GM12878 (cell line): ENCODE measurements at regions of chr9 and their contacts with region 1.

Region 1: GRCh38 chr9:83544002-83544698 is 5.9 kb upstream of the FRMD3 start:
- DNase-seq: peak; percentile 8
- ATAC-seq: peak; percentile 99
- H3K4me3 ChIP-seq: no peak overlapping the region
- H3K27ac ChIP-seq: no peak overlapping the region
- H3K4me1 ChIP-seq: no peaks in the 10 kb centered on the region
- H3K27me3 ChIP-seq: no peaks in the 10 kb centered on the region
- CTCF ChIP-seq: peak; percentile 72 to 87 (median 82)
- EP300 ChIP-seq: no peak
- POLR2A ChIP-seq: no peak
- RAD21 ChIP-seq: peak; percentile 85

Region 2: DNA sequence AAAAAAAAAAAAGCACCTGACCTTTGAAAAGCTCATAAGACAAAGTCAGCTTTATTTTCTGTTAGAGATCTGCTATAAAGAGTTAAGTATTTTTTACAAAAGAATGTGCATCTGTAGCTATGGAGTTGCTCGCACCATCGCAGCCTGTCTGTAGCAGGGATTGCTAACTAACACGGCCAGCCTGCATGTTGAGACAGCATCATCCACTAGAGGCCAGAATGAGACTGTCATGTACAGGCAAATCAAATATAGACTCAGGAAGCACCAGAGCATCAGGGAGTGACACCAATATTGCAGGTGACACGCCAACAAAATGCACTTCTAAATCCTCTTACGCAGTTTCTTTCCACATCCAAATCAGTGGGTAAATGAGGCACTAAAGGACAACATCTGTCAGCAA is 344.9 kb before region 1 on chr9:
- CTCF ChIA-PET with region 1: interaction called, 3 read pairs
- POLR2A ChIA-PET with region 1: no interaction called
- RAD21 ChIA-PET with region 1: no interaction called
- SMC1A ChIA-PET with region 1: no interaction called
- in situ Hi-C with region 1: no loop called
- intact Hi-C with region 1: loop called (anchors 1 kb)
- DNase-seq: no peak
- ATAC-seq: peak; percentile 74
- H3K4me3 ChIP-seq: no peak overlapping the region
- H3K27ac ChIP-seq: no peak overlapping the region
- H3K4me1 ChIP-seq: no peaks in the 10 kb centered on the region
- H3K27me3 ChIP-seq: no peaks in the 10 kb centered on the region; a peak in 1 of 4 replicates
- CTCF ChIP-seq: peak; percentile 19 to 48 (median 36); a peak in 4 of 6 replicates
- EP300 ChIP-seq: no peak
- POLR2A ChIP-seq: no peak
- RAD21 ChIP-seq: peak; percentile 43

Region 3: DNA sequence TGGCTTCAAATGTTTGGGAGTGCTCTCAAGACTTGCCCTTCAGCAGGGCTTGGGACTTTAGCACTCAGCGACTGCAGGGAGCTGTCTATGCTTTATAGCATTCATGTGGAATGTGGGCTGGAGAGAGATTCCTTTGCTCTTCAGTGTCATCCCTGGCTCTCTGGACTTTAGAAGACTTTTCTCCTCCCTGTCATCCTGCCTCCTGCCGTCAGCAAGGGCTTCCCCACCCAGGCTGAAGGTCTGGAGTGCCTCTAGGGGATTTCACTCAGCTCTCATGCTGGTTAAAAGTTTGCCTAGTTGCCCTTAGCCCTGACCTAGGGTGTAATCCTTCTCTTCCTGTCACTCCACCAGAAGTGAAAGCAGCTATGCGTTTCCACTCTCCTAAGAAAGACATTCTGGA is 216.8 kb before region 1 on chr9:
- CTCF ChIA-PET with region 1: interaction called, 401 read pairs
- POLR2A ChIA-PET with region 1: no interaction called
- RAD21 ChIA-PET with region 1: interaction called, 211 read pairs
- SMC1A ChIA-PET with region 1: interaction called, 198 read pairs
- in situ Hi-C with region 1: no loop called
- intact Hi-C with region 1: loop called (anchors 1 kb)
- DNase-seq: no peak
- ATAC-seq: no peak
- H3K4me3 ChIP-seq: no peak overlapping the region
- H3K27ac ChIP-seq: no peak overlapping the region
- H3K4me1 ChIP-seq: no peaks in the 10 kb centered on the region
- H3K27me3 ChIP-seq: no peaks in the 10 kb centered on the region
- CTCF ChIP-seq: no peak
- EP300 ChIP-seq: no peak
- POLR2A ChIP-seq: no peak
- RAD21 ChIP-seq: no peak

Region 4: GRCh38 chr9:83342761-83343160 is 201.4 kb before region 1 on chr9:
- CTCF ChIA-PET with region 1: interaction called, 401 read pairs
- POLR2A ChIA-PET with region 1: no interaction called
- RAD21 ChIA-PET with region 1: interaction called, 6 read pairs
- SMC1A ChIA-PET with region 1: interaction called, 198 read pairs
- in situ Hi-C with region 1: loop called (anchors 5 kb)
- intact Hi-C with region 1: no loop called
- DNase-seq: no peak
- ATAC-seq: no peak
- H3K4me3 ChIP-seq: no peak overlapping the region
- H3K27ac ChIP-seq: no peak overlapping the region
- H3K4me1 ChIP-seq: no peaks in the 10 kb centered on the region
- H3K27me3 ChIP-seq: no peaks in the 10 kb centered on the region
- CTCF ChIP-seq: no peak
- EP300 ChIP-seq: no peak
- POLR2A ChIP-seq: no peak
- RAD21 ChIP-seq: no peak

Region 5: DNA sequence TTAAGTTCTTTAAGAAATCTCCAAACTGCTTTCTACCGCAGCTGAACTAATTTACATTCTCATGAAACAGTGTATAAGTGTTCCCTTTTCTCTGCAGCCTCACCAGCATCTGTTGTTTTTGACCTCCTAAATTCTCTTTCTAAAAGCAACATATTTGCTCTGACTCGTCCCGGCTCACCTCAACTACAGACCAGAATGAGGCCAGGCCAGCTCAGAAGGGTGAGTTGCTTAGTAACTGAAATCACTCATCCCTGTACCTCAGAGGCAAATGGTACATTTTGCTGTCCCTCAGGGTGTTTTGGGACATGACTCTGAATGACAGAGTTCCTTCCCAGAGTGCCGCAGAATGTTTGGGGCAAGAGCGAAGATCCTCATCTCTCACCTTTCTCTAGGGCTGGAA is 133.4 kb before region 1 on chr9:
- CTCF ChIA-PET with region 1: no interaction called
- POLR2A ChIA-PET with region 1: no interaction called
- RAD21 ChIA-PET with region 1: no interaction called
- SMC1A ChIA-PET with region 1: no interaction called
- in situ Hi-C with region 1: no loop called
- intact Hi-C with region 1: no loop called
- DNase-seq: no peak
- ATAC-seq: no peak
- H3K4me3 ChIP-seq: no peak overlapping the region
- H3K27ac ChIP-seq: no peak overlapping the region
- H3K4me1 ChIP-seq: no peaks in the 10 kb centered on the region
- H3K27me3 ChIP-seq: no peaks in the 10 kb centered on the region
- CTCF ChIP-seq: no peak
- EP300 ChIP-seq: no peak
- POLR2A ChIP-seq: no peak
- RAD21 ChIP-seq: no peak

Region 6: DNA sequence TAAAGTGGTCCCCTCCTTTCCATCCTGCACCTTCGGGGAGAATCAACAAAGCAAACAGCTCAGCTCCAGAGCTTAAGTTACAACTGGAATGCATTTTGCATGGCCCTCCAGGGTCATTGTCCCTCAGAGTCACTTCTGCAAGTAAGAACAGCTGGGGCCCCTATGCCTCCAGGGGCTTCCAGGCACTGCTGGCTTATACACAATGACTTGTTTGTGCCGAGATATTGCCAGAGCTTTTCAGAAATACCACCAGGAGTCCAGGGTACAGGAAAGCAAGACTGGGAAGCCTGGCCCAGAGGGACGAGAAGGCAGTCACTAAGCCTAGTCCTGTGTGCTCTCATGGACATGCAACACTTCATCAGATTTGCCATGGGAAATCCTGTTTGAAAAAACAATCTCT is 17.2 kb before region 1 on chr9:
- CTCF ChIA-PET with region 1: interaction called, 14 read pairs
- POLR2A ChIA-PET with region 1: no interaction called
- RAD21 ChIA-PET with region 1: interaction called, 5 read pairs
- SMC1A ChIA-PET with region 1: interaction called, 6 read pairs
- in situ Hi-C with region 1: no loop called
- intact Hi-C with region 1: no loop called
- DNase-seq: no peak
- ATAC-seq: no peak
- H3K4me3 ChIP-seq: no peak overlapping the region
- H3K27ac ChIP-seq: no peak overlapping the region
- H3K4me1 ChIP-seq: no peaks in the 10 kb centered on the region
- H3K27me3 ChIP-seq: no peaks in the 10 kb centered on the region
- CTCF ChIP-seq: no peak
- EP300 ChIP-seq: no peak
- POLR2A ChIP-seq: no peak
- RAD21 ChIP-seq: no peak

Region 7: DNA sequence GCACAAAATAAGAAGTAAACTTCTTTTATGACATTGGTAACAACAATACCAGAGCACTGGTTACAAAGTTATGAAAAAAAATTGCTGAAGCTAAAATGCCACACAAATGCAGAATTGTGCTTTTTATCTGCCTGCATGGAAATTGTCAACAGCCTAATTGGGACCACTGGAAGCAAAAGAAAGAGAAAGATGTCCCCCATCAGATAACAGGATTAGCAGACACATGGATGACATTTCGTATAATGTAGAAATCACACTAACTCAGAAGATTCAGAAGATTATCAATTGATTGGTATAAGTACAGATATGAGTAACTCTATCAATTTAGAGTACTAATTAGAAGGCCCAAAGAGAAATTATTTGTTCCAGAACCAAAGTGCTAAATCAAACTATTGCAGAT is 13.2 kb after region 1 on chr9:
- CTCF ChIA-PET with region 1: interaction called, 24 read pairs
- POLR2A ChIA-PET with region 1: interaction called, 3 read pairs
- RAD21 ChIA-PET with region 1: interaction called, 3 read pairs
- SMC1A ChIA-PET with region 1: interaction called, 3 read pairs
- in situ Hi-C with region 1: no loop called
- intact Hi-C with region 1: no loop called
- DNase-seq: no peak
- ATAC-seq: no peak
- H3K4me3 ChIP-seq: no peak overlapping the region
- H3K27ac ChIP-seq: no peak overlapping the region
- H3K4me1 ChIP-seq: no peaks in the 10 kb centered on the region
- H3K27me3 ChIP-seq: no peaks in the 10 kb centered on the region
- CTCF ChIP-seq: no peak
- EP300 ChIP-seq: no peak
- POLR2A ChIP-seq: no peak
- RAD21 ChIP-seq: no peak

Region 8: DNA sequence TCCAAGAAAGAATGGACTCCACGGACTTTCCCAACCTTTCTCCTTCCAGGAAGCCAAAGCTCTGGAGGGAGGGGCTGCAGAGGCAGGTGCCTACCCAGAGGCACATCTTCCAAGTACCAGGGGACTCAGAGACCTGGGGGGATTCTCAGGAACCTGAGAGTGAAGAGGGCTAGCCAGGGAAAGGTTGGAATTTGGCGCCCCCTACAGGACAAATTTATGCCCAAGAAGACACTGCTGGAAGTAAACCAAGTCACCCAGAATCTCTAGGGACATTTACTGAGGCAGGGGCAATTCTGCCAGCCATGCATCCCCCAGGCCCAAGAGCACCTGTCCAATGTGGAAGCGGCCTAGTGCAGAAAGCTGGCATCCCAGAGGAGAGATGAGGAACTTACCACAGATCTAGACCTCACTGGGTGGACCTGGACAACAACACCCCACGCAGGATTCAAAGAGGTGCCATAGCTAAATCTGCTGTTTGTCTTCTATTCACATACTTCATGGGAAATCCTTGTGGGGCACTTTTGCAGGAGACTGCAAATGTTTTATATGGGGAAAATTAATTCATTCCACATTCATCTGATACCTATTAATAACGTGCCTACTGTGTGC is 52.9 kb after region 1 on chr9:
- CTCF ChIA-PET with region 1: interaction called, 18 read pairs
- POLR2A ChIA-PET with region 1: no interaction called
- RAD21 ChIA-PET with region 1: interaction called, 7 read pairs
- SMC1A ChIA-PET with region 1: interaction called, 4 read pairs
- in situ Hi-C with region 1: no loop called
- intact Hi-C with region 1: no loop called
- DNase-seq: no peak
- ATAC-seq: peak; percentile 92
- H3K4me3 ChIP-seq: no peak overlapping the region
- H3K27ac ChIP-seq: no peak overlapping the region
- H3K4me1 ChIP-seq: no peaks in the 10 kb centered on the region
- H3K27me3 ChIP-seq: no peaks in the 10 kb centered on the region
- CTCF ChIP-seq: peak; percentile 69 to 78 (median 71)
- EP300 ChIP-seq: no peak
- POLR2A ChIP-seq: no peak
- RAD21 ChIP-seq: peak; percentile 70